ENCODE measurements at regions of chr12 and their contacts with region 1.

Region 1: DNA sequence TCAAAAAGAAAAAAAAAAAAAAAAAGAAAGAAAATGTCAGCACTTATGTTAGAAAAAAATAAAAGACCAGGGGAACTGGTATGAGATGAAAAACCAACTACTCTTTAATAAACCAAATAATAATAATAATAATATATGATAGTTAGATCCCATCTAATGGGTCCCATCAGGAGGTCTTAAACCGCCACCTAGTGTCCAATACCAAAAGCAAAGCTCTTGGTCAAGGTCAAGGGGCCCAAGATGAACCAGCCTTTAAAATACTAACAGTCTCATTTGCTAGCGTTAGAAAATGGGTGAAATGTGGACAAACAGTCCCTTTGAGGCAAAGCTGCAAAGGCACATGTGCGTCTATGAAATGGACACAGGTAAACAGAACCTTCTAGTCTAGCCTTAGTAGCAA is 12.3 kb downstream of the BRAP start:
- DNase-seq: peak; percentile 33
- ATAC-seq: peak; percentile 67
- H3K4me3 ChIP-seq: no peak overlapping the region
- H3K27ac ChIP-seq: no peak overlapping the region
- H3K4me1 ChIP-seq: no peaks in the 10 kb centered on the region
- H3K27me3 ChIP-seq: no peaks in the 10 kb centered on the region
- CTCF ChIP-seq: peak; percentile 53 to 66 (median 56); a peak in 5 of 6 replicates
- POLR2A ChIP-seq: no peak
- RAD21 ChIP-seq: peak; percentile 76

Region 2: DNA sequence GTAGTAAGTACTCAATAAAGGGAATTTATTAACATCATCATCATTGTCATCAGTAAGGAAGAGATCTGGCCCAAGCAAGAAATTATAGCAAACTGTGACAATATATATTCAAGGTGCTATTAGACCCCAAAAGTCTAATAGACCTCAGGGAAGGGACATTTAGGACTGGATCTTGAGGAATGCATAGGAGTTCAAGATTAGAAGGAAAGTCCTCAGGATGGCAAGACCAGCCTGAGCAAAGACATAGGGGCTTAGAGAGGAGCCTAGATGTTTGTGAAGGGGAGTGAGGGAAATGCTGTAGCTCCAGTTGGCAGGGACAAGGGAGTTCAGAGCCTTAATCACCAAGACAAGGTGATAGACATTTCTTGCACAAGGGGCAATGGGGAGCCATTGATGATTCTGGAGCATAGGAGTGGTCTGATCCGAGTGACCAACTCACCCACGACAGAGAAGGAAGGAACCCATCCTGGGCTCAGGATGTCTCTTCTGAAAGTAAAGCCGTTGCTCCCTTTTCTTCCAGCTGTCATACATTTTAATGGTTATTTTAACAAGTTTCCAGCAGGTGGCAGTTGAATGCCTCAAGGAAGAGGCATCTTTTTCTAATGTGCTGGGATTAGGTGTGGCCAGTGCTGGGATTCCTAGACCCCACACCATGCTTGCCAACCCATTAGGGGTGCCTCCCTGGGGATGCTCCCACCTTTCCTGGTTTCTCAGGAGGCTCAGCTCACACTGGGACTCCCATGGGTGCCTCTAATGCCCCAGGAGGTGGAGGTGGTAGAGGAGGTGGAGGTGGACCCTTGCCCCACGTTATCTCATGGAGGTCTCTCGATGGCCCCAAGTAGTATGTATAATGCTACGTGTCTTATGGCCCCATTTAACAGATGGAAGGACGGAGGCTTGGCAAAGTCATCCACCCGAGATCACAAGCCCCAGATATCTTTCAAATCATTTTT is 342.4 kb before region 1 on chr12:
- CTCF ChIA-PET with region 1: interaction called, 3 read pairs
- POLR2A ChIA-PET with region 1: no interaction called
- RAD21 ChIA-PET with region 1: interaction called in 1 of 2 experiments, 3 read pairs
- intact Hi-C with region 1: loop called (anchors 5 kb)
- DNase-seq: peak; percentile 42
- ATAC-seq: peak; percentile 84
- H3K4me3 ChIP-seq: no peak overlapping the region
- H3K27ac ChIP-seq: no peak overlapping the region
- H3K4me1 ChIP-seq: peaks cover 0 to 12% of the 10 kb centered on the region in 2 experiments; a peak in 2 of 4 replicates
- H3K27me3 ChIP-seq: no peaks in the 10 kb centered on the region
- CTCF ChIP-seq: peak; percentile 52 to 77 (median 68)
- POLR2A ChIP-seq: no peak
- RAD21 ChIP-seq: peak; percentile 80

Region 3: GRCh38 chr12:111482462-111482861 is 191.0 kb before region 1 on chr12:
- CTCF ChIA-PET with region 1: no interaction called
- POLR2A ChIA-PET with region 1: no interaction called
- RAD21 ChIA-PET with region 1: interaction called in 1 of 2 experiments, 4 read pairs
- intact Hi-C with region 1: loop called (anchors 10 kb)
- DNase-seq: no peak
- ATAC-seq: peak; percentile 46; the same call in 1 of the 2 replicates
- H3K4me3 ChIP-seq: no peak overlapping the region
- H3K27ac ChIP-seq: no peak overlapping the region
- H3K4me1 ChIP-seq: no peaks in the 10 kb centered on the region
- H3K27me3 ChIP-seq: no peaks in the 10 kb centered on the region
- CTCF ChIP-seq: peak; percentile 10 to 47 (median 21); a peak in 2 of 6 replicates
- POLR2A ChIP-seq: no peak
- RAD21 ChIP-seq: peak; percentile 22; the same call in 1 of the 2 replicates

Measured in HCT116 (cell line).